ENCODE measurements at regions of chr6 and their contacts with region 1.

Region 1: GRCh38 chr6:131782764-131783163 is 25.1 kb upstream of the ENPP1 start:
- DNase-seq: peak; percentile 14 to 29
- H3K4me3 ChIP-seq: no peak overlapping the region
- H3K27ac ChIP-seq: no peak overlapping the region
- H3K4me1 ChIP-seq: peaks cover 0 to 3% of the 10 kb centered on the region in 2 donors
- H3K27me3 ChIP-seq: no peaks in the 10 kb centered on the region
- CTCF ChIP-seq: peak in 4 of 6 experiments; percentile 41 to 65 (median 58)
- POLR2A ChIP-seq: no peak

Region 2: GRCh38 chr6:131909408-131910218 is 126.8 kb after region 1 on chr6:
- intact Hi-C with region 1: loop called (anchors 5 kb)
- DNase-seq: peak; percentile 73 to 79
- H3K4me3 ChIP-seq: no peak overlapping the region
- H3K27ac ChIP-seq: no peak overlapping the region
- H3K4me1 ChIP-seq: no peaks in the 10 kb centered on the region
- H3K27me3 ChIP-seq: no peaks in the 10 kb centered on the region
- CTCF ChIP-seq: peak; percentile 68 to 84 (median 80)
- POLR2A ChIP-seq: no peak

Region 3: DNA sequence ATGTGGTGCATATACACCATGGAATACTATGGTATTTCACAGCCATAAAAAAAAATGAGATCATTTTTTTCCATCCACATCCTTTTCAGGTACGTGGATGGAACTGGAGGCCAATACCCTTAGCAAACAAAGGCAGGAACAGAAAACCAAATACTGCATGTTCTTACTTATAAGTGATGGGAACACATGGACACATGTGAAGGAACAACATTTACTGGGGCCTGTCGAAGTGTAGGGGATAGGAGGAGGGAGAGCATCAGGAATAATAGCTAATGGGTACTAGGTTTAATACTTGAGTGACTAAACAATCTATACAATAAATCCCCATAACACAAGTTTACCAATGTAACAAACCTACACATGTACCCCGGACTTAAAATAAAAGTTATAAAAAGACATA is 137.9 kb after region 1 on chr6:
- intact Hi-C with region 1: no loop called
- DNase-seq: no peak
- H3K4me3 ChIP-seq: no peak overlapping the region
- H3K27ac ChIP-seq: no peak overlapping the region
- H3K4me1 ChIP-seq: no peaks in the 10 kb centered on the region
- H3K27me3 ChIP-seq: no peaks in the 10 kb centered on the region
- CTCF ChIP-seq: no peak
- POLR2A ChIP-seq: no peak

Region 4: GRCh38 chr6:132190097-132190814 is 407.5 kb after region 1 on chr6:
- intact Hi-C with region 1: no loop called
- DNase-seq: no peak
- H3K4me3 ChIP-seq: no peak overlapping the region
- H3K27ac ChIP-seq: no peak overlapping the region
- H3K4me1 ChIP-seq: no peaks in the 10 kb centered on the region
- H3K27me3 ChIP-seq: no peaks in the 10 kb centered on the region
- CTCF ChIP-seq: no peak
- POLR2A ChIP-seq: no peak